Endothelial cell of umbilical vein (primary cell): ENCODE measurements at regions of chr3 and their contacts with region 1.

Region 1: GRCh38 chr3:128969993-128970739 is 23.7 kb downstream of the CFAP92 start:
- DNase-seq: peak; percentile 55
- H3K4me3 ChIP-seq: no peak overlapping the region
- H3K27ac ChIP-seq: no peak overlapping the region
- H3K4me1 ChIP-seq: no peaks in the 10 kb centered on the region
- H3K27me3 ChIP-seq: no peaks in the 10 kb centered on the region
- CTCF ChIP-seq: peak; percentile 80 to 89
- POLR2A ChIP-seq: no peak

Region 2: GRCh38 chr3:129003578-129004160 is 33.5 kb after region 1 on chr3:
- CTCF ChIA-PET with region 1: interaction called, 15 read pairs
- POLR2A ChIA-PET with region 1: no interaction called
- dilution Hi-C with region 1: no loop called
- intact Hi-C with region 1: no loop called
- DNase-seq: no peak
- H3K4me3 ChIP-seq: no peak overlapping the region
- H3K27ac ChIP-seq: no peak overlapping the region
- H3K4me1 ChIP-seq: peaks cover 15% of the 10 kb centered on the region
- H3K27me3 ChIP-seq: peaks cover 26 to 44% of the 10 kb centered on the region in 2 experiments
- CTCF ChIP-seq: peak in 1 of 2 donors; percentile 12
- POLR2A ChIP-seq: no peak

Region 3: GRCh38 chr3:129052675-129053074 is 82.5 kb after region 1 on chr3:
- CTCF ChIA-PET with region 1: interaction called, 121 read pairs
- POLR2A ChIA-PET with region 1: no interaction called
- dilution Hi-C with region 1: no loop called
- intact Hi-C with region 1: loop called (anchors 1 kb)
- DNase-seq: peak; percentile 73
- H3K4me3 ChIP-seq: no peak overlapping the region
- H3K27ac ChIP-seq: no peak overlapping the region
- H3K4me1 ChIP-seq: peaks cover 15% of the 10 kb centered on the region
- H3K27me3 ChIP-seq: no peaks in the 10 kb centered on the region
- CTCF ChIP-seq: no peak
- POLR2A ChIP-seq: no peak

Region 4: GRCh38 chr3:129106331-129106730 is 136.2 kb after region 1 on chr3:
- CTCF ChIA-PET with region 1: interaction called, 21 read pairs
- POLR2A ChIA-PET with region 1: no interaction called
- dilution Hi-C with region 1: no loop called
- intact Hi-C with region 1: no loop called
- DNase-seq: no peak
- H3K4me3 ChIP-seq: no peak overlapping the region
- H3K27ac ChIP-seq: no peak overlapping the region
- H3K4me1 ChIP-seq: no peaks in the 10 kb centered on the region
- H3K27me3 ChIP-seq: no peaks in the 10 kb centered on the region
- CTCF ChIP-seq: no peak
- POLR2A ChIP-seq: no peak

Region 5: DNA sequence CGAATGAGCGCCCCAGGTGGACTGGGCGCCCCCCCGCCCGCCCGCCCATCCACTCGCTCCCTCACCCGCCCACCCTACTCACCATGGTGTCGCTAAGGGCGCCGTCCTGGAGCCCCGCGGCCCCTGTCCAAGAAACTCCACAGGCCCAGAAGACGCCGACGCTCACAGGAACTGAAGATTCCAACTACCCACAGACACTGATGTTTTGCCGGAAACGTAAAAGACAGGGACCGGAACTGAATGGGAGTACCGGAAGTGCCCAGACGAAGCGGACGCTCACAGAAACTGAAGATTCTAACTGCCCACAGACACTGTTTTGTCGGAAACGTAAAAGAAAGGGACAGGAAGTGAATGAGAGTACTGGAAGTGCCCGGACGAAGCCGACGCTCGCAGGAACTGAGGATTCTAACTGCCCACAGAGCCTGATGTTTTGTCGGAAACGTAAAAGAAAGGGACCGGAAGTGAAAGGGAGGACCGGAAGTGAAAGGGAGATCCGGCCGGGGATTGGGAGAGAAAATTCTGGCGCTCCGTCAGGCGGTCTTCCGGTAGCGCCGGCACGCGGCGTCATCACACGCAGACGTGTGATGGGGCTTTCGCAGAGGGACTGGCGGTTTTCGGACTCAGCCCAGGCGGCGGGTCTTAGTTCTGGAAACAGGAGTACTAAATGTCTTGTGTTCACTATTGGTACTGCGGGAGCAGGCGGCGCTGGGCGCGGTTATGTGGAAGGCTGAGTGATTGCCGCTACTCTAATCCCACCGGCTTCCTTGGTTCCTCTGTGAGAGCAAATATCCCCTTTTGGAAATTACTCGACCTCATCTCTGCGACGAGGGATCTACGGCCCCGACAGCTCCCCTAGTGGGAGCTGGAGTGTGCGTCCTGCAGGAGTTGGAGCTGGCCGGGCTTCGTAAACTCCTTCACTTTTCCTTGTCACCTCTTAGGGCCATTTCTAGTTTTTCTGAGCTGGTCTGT is 191.0 kb after region 1 on chr3 and contains the start of gene ISY1:
- CTCF ChIA-PET with region 1: interaction called, 60 read pairs
- POLR2A ChIA-PET with region 1: no interaction called
- dilution Hi-C with region 1: no loop called
- intact Hi-C with region 1: no loop called
- DNase-seq: peak; percentile 95
- H3K4me3 ChIP-seq: peak within 1 kb of the TSS; percentile 82 to 100 (median 99)
- H3K27ac ChIP-seq: peak within 1 kb of the TSS; percentile 86
- H3K4me1 ChIP-seq: peaks cover 19% of the 10 kb centered on the region
- H3K27me3 ChIP-seq: no peaks in the 10 kb centered on the region
- CTCF ChIP-seq: peak; percentile 88 to 93
- POLR2A ChIP-seq: peak; percentile 99
- total RNA-seq, gene ISY1: 50.6 and 59.4 TPM in 2 replicates

Region 6: DNA sequence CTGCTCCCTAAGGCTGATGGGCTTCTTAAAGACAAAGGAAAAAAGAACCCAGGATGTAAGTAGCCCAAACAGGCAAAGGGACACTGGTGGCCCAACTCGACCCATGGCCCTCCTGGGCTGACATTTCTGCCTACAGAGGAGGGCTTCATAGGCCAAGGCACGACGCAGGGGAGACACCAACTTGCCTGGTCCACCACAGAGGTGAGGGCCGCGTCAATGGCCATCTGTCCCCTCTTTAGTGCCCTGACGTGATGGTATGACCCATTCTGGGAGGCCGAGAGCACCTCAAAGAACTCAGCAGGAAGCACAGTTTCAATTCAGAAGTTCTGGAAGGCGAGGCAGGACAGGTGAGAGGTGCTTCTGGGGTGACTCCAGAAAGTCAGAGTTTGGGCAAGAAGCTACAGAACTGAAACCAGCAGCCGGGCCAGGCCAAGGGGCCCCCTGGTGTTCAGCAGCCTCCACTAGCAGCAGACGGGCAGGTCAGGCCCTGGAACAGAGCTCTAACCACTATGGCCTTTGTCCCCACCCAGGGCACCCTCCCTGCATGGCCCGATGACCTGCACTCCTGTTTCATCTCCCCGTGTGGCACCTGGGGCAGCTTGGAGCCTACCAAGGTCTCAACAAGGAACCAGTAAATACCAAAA is 353.6 kb after region 1 on chr3:
- CTCF ChIA-PET with region 1: interaction called, 13 read pairs
- POLR2A ChIA-PET with region 1: no interaction called
- dilution Hi-C with region 1: no loop called
- intact Hi-C with region 1: no loop called
- DNase-seq: no peak
- H3K4me3 ChIP-seq: no peak overlapping the region
- H3K27ac ChIP-seq: no peak overlapping the region
- H3K4me1 ChIP-seq: no peaks in the 10 kb centered on the region
- H3K27me3 ChIP-seq: no peaks in the 10 kb centered on the region
- CTCF ChIP-seq: peak in 1 of 2 donors; percentile 32
- POLR2A ChIP-seq: no peak

Region 7: GRCh38 chr3:129449279-129450115 is 479.3 kb after region 1 on chr3:
- CTCF ChIA-PET with region 1: no interaction called
- POLR2A ChIA-PET with region 1: no interaction called
- dilution Hi-C with region 1: no loop called
- intact Hi-C with region 1: no loop called
- DNase-seq: peak; percentile 75
- H3K4me3 ChIP-seq: no peak overlapping the region
- H3K27ac ChIP-seq: peak overlapping the region; percentile 50
- H3K4me1 ChIP-seq: peaks cover 21% of the 10 kb centered on the region
- H3K27me3 ChIP-seq: no peaks in the 10 kb centered on the region
- CTCF ChIP-seq: no peak
- POLR2A ChIP-seq: no peak